CD14-positive monocyte (primary cell): ENCODE measurements at regions of chr2 and their contacts with region 1.

Region 1: DNA sequence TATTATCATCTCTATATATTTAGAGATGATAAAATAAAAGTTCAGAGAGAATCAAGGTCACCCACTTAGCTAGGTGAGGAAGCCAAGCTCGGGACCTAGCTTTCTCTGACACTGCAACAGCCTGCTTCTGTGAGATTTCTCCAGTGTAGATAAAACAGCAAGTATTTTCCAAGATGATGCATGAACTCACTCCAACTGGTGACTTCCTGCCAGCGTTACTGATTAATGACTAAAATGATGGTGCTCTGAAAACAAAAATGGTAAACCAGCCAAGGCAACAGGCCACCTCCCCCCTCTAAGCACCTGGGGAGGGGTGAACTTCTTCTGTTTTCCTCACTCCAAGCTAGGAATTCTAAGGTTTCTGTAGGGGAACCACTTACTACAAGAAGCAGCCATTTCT is 510.2 kb upstream of the ID2 start:
- DNase-seq: no peak
- H3K4me3 ChIP-seq: no peak overlapping the region
- H3K4me3 Mint-ChIP-seq: no peak overlapping the region
- H3K27ac ChIP-seq: no peak overlapping the region
- H3K27ac Mint-ChIP-seq: no peak overlapping the region
- H3K4me1 ChIP-seq: peaks cover 14 to 24% of the 10 kb centered on the region in 2 donors
- H3K4me1 Mint-ChIP-seq: peaks cover 31% of the 10 kb centered on the region
- H3K27me3 ChIP-seq: no peaks in the 10 kb centered on the region
- H3K27me3 Mint-ChIP-seq: no peaks in the 10 kb centered on the region
- CTCF ChIP-seq: no peak

Region 2: GRCh38 chr2:8004250-8004681 is 167.3 kb before region 1 on chr2:
- intact Hi-C with region 1: loop called in 1 of 2 experiments (anchors 10 kb)
- DNase-seq: peak; percentile 78 to 91 (median 85)
- H3K4me3 ChIP-seq: no peak overlapping the region
- H3K4me3 Mint-ChIP-seq: peak overlapping the region in 1 of 2 donors; percentile 5
- H3K27ac ChIP-seq: no peak overlapping the region
- H3K27ac Mint-ChIP-seq: peak overlapping the region in 6 of 7 donors; percentile 52 to 89 (median 67)
- H3K4me1 ChIP-seq: peaks cover 4 to 15% of the 10 kb centered on the region in 2 donors
- H3K4me1 Mint-ChIP-seq: peaks cover 20% of the 10 kb centered on the region
- H3K27me3 ChIP-seq: no peaks in the 10 kb centered on the region
- H3K27me3 Mint-ChIP-seq: peaks cover 0 to 2% (median 0%) of the 10 kb centered on the region in 3 donors
- CTCF ChIP-seq: no peak